PC-9 (cell line): ENCODE measurements at regions of chr6 and their contacts with region 1.

Region 1: GRCh38 chr6:30600451-30600961 is 16.5 kb downstream of the PPP1R10 start:
- DNase-seq: no peak
- H3K4me3 ChIP-seq: no peak overlapping the region
- H3K27ac ChIP-seq: no peak overlapping the region
- H3K4me1 ChIP-seq: no peaks in the 10 kb centered on the region
- H3K27me3 ChIP-seq: no peaks in the 10 kb centered on the region
- CTCF ChIP-seq: no peak

Region 2: DNA sequence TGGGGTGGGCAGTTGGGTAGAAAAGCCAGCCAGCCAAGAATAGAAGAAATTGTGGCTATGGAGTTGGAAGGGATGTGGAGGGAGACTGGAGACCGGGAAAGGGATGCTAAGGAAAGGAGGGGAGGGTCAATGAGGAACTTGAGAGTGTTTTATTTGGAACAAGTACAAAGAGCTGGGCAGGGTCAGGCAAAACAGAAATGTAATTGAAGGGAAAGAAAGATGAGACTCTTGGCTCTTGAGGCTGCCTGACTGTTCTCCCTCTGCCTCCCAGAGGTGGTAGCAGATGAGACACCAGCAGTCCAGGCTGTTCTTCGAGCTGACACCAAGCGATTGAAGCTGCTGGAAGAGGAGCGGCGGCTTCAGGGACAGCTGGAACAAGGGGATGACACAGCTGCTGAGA is 16.6 kb before region 1 on chr6:
- CTCF ChIA-PET with region 1: interaction called, 3 read pairs
- POLR2A ChIA-PET with region 1: interaction called, 11 read pairs
- intact Hi-C with region 1: no loop called
- DNase-seq: no peak
- H3K4me3 ChIP-seq: no peak overlapping the region
- H3K27ac ChIP-seq: no peak overlapping the region
- H3K4me1 ChIP-seq: peaks cover 5% of the 10 kb centered on the region; the same call in 1 of the 2 replicates
- H3K27me3 ChIP-seq: no peaks in the 10 kb centered on the region
- CTCF ChIP-seq: no peak

Region 3: DNA sequence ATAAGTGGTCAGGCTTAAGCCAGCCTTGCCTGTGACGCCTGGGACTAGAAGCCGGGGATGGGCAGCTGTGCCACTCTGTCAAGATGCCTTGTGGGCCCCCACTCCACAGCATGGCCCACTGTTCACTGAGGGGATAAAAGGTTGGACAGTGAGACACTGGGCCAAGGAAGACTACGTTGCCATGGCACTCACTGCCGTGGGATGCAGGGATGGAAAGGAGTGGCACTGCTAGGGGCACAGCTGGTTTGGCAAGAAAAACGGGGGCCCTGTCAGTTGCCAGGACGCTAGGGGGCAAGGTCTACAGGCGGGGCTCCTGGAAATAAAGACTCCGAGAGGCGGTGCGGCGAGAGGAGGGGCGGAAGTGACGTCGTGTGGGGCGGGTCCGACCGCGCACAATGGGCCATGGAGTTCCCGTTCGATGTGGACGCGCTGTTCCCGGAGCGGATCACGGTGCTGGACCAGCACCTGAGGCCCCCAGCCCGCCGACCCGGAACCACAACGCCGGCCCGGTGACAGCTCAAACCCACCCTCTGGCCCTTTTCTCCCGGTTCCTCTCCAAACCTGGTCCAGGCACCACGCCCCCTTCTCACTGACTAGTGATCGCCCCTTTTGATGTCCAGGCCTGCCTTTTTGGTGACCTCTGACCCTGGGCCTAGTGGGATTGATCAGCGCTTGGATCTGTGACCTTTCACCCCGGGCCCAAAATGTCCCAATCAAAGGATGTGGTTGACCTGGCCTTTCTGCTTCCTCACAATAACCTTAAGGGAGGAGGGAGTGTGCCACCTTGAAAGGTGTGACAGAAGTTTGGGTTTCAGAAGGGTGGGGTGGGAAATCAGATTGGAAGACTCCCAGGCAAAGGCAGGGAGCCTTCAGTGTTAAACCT is 26.2 kb after region 1 on chr6 and contains the start of gene ATAT1:
- CTCF ChIA-PET with region 1: interaction called, 3 read pairs
- POLR2A ChIA-PET with region 1: interaction called, 15 read pairs
- intact Hi-C with region 1: no loop called
- DNase-seq: peak; percentile 75 to 90
- H3K4me3 ChIP-seq: peak within 1 kb of the TSS; percentile 86
- H3K27ac ChIP-seq: peak within 1 kb of the TSS; percentile 66
- H3K4me1 ChIP-seq: no peaks in the 10 kb centered on the region; the same call in 1 of the 2 replicates
- H3K27me3 ChIP-seq: no peaks in the 10 kb centered on the region
- CTCF ChIP-seq: no peak; the same call in 1 of the 2 replicates
- total RNA-seq, gene ATAT1: 15.1 and 29.4 TPM in 2 replicates